ENCODE measurements at regions of chr6 and their contacts with region 1.

Region 1: GRCh38 chr6:32337186-32337805 is 34.4 kb downstream of the TSBP1 start:
- DNase-seq: no peak
- ATAC-seq: no peak
- H3K4me3 ChIP-seq: no peak overlapping the region
- H3K4me3 Mint-ChIP-seq: no peak overlapping the region
- H3K27ac ChIP-seq: no peak overlapping the region
- H3K27ac Mint-ChIP-seq: no peak overlapping the region
- H3K4me1 ChIP-seq: no peaks in the 10 kb centered on the region
- H3K4me1 Mint-ChIP-seq: no peaks in the 10 kb centered on the region
- H3K27me3 ChIP-seq: no peaks in the 10 kb centered on the region
- H3K27me3 Mint-ChIP-seq: peaks cover 23% of the 10 kb centered on the region
- CTCF ChIP-seq: no peak

Region 2: DNA sequence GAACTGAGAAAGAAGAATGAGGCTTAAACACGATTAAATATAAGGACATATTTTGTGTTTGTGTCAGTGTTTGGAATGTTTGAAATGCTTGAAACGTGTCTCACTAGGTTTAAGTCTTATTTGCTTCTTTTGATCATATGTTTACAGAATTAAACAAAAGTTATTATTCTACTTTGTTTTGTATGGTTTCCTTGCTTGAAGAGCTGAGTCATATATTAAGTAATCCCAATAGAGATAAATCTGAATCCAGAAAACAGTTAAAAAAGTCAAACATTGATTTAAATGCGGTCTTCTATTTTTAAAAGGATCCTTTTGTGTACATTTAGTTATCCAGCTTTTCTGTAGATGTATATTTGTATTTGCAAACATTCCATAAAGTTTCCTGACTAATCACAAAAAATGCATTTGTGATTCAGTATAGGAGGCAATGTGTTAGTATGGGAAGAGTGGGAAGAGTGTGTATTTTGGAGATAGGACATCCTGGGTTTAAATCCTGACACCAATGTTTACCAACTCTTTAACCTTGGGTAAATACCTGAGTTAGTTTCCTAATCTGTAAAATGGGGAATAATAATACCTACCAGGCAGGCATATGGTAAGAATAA is 38.5 kb before region 1 on chr6:
- CTCF ChIA-PET with region 1: no interaction called
- POLR2A ChIA-PET with region 1: no interaction called
- intact Hi-C with region 1: loop called in 1 of 2 experiments (anchors 5 kb)
- DNase-seq: no peak
- ATAC-seq: no peak
- H3K4me3 ChIP-seq: no peak overlapping the region
- H3K4me3 Mint-ChIP-seq: no peak overlapping the region
- H3K27ac ChIP-seq: no peak overlapping the region
- H3K27ac Mint-ChIP-seq: no peak overlapping the region
- H3K4me1 ChIP-seq: peaks cover 2% of the 10 kb centered on the region
- H3K4me1 Mint-ChIP-seq: peaks cover 3% of the 10 kb centered on the region
- H3K27me3 ChIP-seq: peaks cover 0 to 2% of the 10 kb centered on the region in 2 experiments
- H3K27me3 Mint-ChIP-seq: peaks cover 16% of the 10 kb centered on the region
- CTCF ChIP-seq: no peak

Measured in CD8-positive, alpha-beta T cell (primary cell).